Lower leg skin (tissue), 4 donors: ENCODE measurements at regions of chr5 and their contacts with region 1.

Region 1: DNA sequence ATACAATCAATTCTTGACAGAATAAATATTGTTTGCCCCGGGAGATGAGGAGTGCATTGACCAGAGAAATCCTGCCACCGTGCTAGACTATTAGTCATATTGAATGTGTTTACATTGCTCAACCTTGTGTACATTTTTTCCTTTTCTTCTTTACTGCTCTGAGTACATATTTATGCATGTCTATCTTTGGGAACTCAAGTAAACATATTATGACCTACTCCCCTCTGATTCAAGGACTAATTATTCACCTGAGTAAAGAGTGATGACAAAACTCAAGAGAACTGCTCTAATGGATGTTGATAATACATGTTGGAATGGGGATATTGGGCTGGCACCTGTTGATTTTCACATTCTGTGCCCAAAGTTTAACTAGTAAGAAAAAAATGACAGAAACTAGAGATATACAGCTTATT is 3.9 kb upstream of the SPINK1 start:
- DNase-seq: no peak
- H3K4me3 ChIP-seq: no peak overlapping the region
- CTCF ChIP-seq: peak in 1 of 3 donors; percentile 100
- POLR2A ChIP-seq: no peak

Region 2: GRCh38 chr5:147628058-147628895 is 207.1 kb before region 1 on chr5:
- intact Hi-C with region 1: loop called (anchors 10 kb)
- DNase-seq: peak in 1 of 2 donors; percentile 57
- H3K4me3 ChIP-seq: no peak overlapping the region
- CTCF ChIP-seq: peak in 1 of 3 donors; percentile 25
- POLR2A ChIP-seq: no peak